Head of caudate nucleus (tissue), 42 donors: ENCODE measurements at regions of chr17 and their contacts with region 1.

Region 1: DNA sequence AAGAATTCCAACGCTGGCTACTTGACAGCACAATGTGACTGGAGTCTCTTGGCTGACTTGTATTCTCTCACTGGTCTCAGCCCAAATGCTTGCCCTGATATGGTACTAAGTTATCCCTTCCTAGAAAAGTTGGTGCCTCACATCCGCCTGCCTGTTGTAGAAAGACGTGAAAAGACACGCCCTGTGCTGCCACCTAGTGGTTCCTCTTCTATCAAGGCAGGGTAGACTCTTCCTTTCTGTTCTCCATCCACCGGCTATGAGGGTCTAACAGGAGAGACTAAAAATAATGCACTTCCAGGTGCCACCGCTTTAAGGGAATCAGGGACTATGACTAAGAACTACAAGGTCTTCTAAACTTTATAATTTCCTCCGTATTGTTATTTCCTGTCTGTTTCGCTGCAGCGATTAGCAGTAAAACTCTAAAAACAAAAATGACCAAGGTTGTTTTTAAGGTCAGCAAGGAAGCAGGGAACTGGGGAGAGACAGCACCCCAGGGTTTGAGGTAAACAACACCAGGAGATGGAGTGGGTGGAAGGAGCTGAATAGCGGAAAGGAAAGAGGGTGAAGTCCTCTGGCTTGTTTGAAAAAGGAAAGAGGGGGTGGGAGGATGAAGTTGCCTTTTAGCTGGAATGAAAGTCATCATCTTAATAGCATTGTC is 109.5 kb downstream of the YPEL2 start:
- DNase-seq: peak; percentile 75 to 98 (median 92)

Region 2: GRCh38 chr17:59311130-59311920 is 129.6 kb before region 1 on chr17:
- intact Hi-C with region 1: loop called (anchors 5 kb)
- DNase-seq: peak in 26 of 42 donors; percentile 17 to 84 (median 56)

Region 3: DNA sequence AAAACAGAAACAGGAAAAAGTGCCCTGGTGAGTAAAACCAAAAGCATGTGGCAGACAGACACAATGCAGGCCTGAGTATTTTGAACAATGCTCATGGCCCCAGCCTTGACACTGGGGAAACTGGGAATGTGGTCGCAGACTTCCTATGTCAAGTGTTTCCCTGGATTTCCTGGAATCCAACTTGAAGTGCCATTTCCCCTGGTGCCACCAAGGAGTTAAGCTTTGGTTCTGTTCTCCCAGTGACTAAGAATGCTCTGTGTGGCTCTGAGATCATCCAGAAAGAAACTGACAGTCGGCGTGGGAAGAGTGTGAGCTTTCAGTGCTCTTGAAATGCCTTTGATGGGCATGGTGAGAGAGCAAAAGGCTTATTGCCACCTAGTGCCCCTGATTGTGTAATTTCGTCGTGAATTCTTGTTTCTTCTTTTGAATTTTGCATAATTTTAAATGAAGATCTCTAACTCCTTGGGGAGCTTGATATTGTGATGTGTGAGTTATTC is 13.4 kb before region 1 on chr17:
- intact Hi-C with region 1: no loop called
- DNase-seq: peak in 40 of 42 donors; percentile 29 to 92 (median 74)

Region 4: GRCh38 chr17:59479158-59479557 is 38.2 kb after region 1 on chr17:
- intact Hi-C with region 1: no loop called
- DNase-seq: peak in 1 of 42 donors; percentile 3

Region 5: DNA sequence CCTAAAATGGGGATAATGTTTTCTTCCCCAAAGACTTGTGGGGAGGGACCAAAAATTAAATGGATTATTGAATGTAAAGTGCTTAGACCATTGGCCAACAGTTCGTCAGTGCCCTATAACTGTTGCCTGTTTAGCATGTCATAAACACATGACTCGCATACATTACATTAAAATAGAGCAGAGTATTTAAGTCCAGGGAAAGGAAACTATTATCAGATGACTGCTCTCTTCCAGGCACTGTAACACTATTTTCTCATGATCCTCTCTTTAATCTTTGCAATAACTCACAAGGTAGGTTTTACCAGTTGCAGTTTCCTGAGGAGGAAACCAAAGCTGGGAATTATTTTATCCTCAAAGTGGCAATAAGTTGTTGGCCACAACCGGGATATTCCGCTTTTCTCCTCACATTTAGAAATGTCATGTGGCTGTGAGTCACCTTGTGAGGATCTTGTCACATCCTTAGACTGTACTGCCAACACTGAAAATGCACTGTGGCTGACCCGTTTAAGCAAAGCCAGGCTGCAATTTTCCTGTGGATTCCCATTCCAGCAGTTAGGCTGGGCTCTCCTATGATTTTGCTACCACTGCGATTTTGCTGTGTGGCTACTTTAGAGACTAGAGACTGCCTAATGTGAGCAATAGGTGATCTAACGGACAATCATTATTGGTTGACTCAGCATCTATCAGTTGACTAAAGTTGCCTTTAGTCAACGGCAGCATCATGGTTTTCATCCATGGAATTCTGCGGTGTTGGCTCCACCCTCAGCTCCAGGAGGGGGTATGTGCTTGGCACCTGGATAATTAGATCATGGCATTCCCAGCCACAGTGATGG is 66.2 kb after region 1 on chr17:
- intact Hi-C with region 1: no loop called
- DNase-seq: peak in 7 of 42 donors; percentile 4 to 52 (median 34)